ENCODE measurements at regions of chr6 and their contacts with region 1.

Region 1: GRCh38 chr6:169701954-169702839 is at the starts of genes C6orf120 and WDR27:
- DNase-seq: peak; percentile 96 to 99 (median 98)
- ATAC-seq: peak; percentile 93
- H3K4me3 ChIP-seq: peak within 1 kb of the TSS; percentile 74
- H3K27ac ChIP-seq: peak within 1 kb of the TSS; percentile 90
- H3K4me1 ChIP-seq: peaks cover 13 to 19% of the 10 kb centered on the region in 2 experiments; a peak in 4 of 5 replicates
- H3K27me3 ChIP-seq: no peaks in the 10 kb centered on the region
- CTCF ChIP-seq: peak in 1 of 3 experiments; percentile 24; a peak in 2 of 6 replicates
- EP300 ChIP-seq: peak; percentile 33; the same call in 1 of the 2 replicates
- POLR2A ChIP-seq: peak; percentile 96
- RAD21 ChIP-seq: no peak
- polyA plus RNA-seq, gene C6orf120: 7.7 to 9.7 TPM
- polyA plus RNA-seq, gene WDR27: 4.3 to 5.1 TPM

Region 2: GRCh38 chr6:169640351-169640852 is 61.8 kb before region 1 on chr6:
- CTCF ChIA-PET with region 1: no interaction called
- POLR2A ChIA-PET with region 1: no interaction called
- in situ Hi-C with region 1: no loop called
- intact Hi-C with region 1: no loop called
- DNase-seq: peak in 1 of 4 experiments; percentile 11
- ATAC-seq: peak; percentile 75
- H3K4me3 ChIP-seq: no peak overlapping the region
- H3K27ac ChIP-seq: no peak overlapping the region
- H3K4me1 ChIP-seq: peaks cover 0 to 5% of the 10 kb centered on the region in 2 experiments; a peak in 2 of 5 replicates
- H3K27me3 ChIP-seq: no peaks in the 10 kb centered on the region
- CTCF ChIP-seq: peak in 1 of 3 experiments; percentile 34; a peak in 1 of 6 replicates
- EP300 ChIP-seq: no peak
- POLR2A ChIP-seq: no peak
- RAD21 ChIP-seq: no peak

Region 3: GRCh38 chr6:169714595-169714994 is 12.4 kb after region 1 on chr6:
- CTCF ChIA-PET with region 1: no interaction called
- POLR2A ChIA-PET with region 1: interaction called, 46 read pairs
- in situ Hi-C with region 1: no loop called
- intact Hi-C with region 1: no loop called
- DNase-seq: no peak
- ATAC-seq: no peak
- H3K4me3 ChIP-seq: no peak overlapping the region
- H3K27ac ChIP-seq: no peak overlapping the region
- H3K4me1 ChIP-seq: no peaks in the 10 kb centered on the region
- H3K27me3 ChIP-seq: no peaks in the 10 kb centered on the region
- CTCF ChIP-seq: no peak
- EP300 ChIP-seq: no peak
- POLR2A ChIP-seq: no peak
- RAD21 ChIP-seq: no peak

Region 4: DNA sequence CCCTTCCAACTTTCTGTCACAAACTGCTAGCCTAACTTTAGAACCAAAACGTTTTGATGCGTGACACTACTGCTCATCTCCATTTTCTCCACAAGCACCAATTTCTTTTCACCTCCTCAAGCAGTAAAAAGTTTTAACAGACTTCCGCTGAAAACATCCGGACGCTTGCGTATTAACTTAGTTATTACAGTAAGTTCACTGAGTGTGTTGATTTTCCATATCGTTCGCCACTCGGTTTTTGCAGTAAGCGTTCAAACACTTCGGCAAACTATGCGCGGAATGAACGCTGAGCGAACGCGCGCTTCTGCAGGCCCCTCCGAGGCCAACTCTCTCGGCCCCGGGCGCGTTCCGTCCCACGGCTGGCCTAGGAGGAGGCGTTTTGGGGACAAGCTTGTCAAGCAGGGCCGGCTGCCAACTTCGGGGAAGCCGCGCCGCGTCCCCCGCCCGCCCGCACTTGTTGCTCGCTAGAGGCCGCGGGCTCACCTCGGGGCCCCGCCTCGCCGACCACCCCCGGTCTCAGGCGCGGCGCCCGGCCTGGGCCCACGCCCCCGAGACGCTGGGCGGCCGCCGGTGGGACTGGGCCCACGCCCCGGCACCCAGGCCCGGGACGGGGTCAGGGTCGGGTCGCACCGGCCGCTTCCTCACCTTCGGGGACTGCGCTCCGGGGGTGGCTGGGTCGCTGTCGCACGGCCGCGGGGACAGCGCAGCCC is 21.2 kb after region 1 on chr6:
- CTCF ChIA-PET with region 1: no interaction called
- POLR2A ChIA-PET with region 1: interaction called, 46 read pairs
- in situ Hi-C with region 1: no loop called
- intact Hi-C with region 1: loop called (anchors 1 kb)
- DNase-seq: peak; percentile 79 to 86 (median 84)
- ATAC-seq: peak; percentile 70
- H3K4me3 ChIP-seq: peak overlapping the region; percentile 63
- H3K27ac ChIP-seq: peak overlapping the region; percentile 72
- H3K4me1 ChIP-seq: peaks cover 25 to 31% of the 10 kb centered on the region in 2 experiments
- H3K27me3 ChIP-seq: no peaks in the 10 kb centered on the region
- CTCF ChIP-seq: no peak
- EP300 ChIP-seq: 0 out of 2 replicates have a peak, but pooled peaks have one; percentile 3
- POLR2A ChIP-seq: no peak
- RAD21 ChIP-seq: no peak

Region 5: GRCh38 chr6:169789982-169790927 is 88.1 kb after region 1 on chr6:
- CTCF ChIA-PET with region 1: no interaction called
- POLR2A ChIA-PET with region 1: no interaction called
- in situ Hi-C with region 1: no loop called
- intact Hi-C with region 1: loop called (anchors 1 kb)
- DNase-seq: peak; percentile 81 to 91 (median 90)
- ATAC-seq: peak; percentile 97
- H3K4me3 ChIP-seq: peak overlapping the region; percentile 26
- H3K27ac ChIP-seq: no peak overlapping the region
- H3K4me1 ChIP-seq: peaks cover 11 to 17% of the 10 kb centered on the region in 2 experiments; a peak in 3 of 5 replicates
- H3K27me3 ChIP-seq: peaks cover 63 to 87% of the 10 kb centered on the region in 2 experiments
- CTCF ChIP-seq: peak; percentile 96 to 99 (median 99)
- EP300 ChIP-seq: no peak
- POLR2A ChIP-seq: no peak
- RAD21 ChIP-seq: peak; percentile 88 to 93

Region 6: GRCh38 chr6:170165072-170165463 is 462.9 kb after region 1 on chr6:
- CTCF ChIA-PET with region 1: no interaction called
- POLR2A ChIA-PET with region 1: no interaction called
- in situ Hi-C with region 1: no loop called
- intact Hi-C with region 1: no loop called
- DNase-seq: no peak
- ATAC-seq: no peak
- H3K4me3 ChIP-seq: no peak overlapping the region
- H3K27ac ChIP-seq: no peak overlapping the region
- H3K4me1 ChIP-seq: peaks cover 0 to 12% of the 10 kb centered on the region in 2 experiments; a peak in 2 of 5 replicates
- H3K27me3 ChIP-seq: peaks cover 0 to 41% of the 10 kb centered on the region in 2 experiments; a peak in 2 of 5 replicates
- CTCF ChIP-seq: no peak
- EP300 ChIP-seq: no peak
- POLR2A ChIP-seq: no peak
- RAD21 ChIP-seq: no peak